ENCODE measurements at regions of chr1 and their contacts with region 1.

Region 1: GRCh38 chr1:74010206-74010605 is 187.8 kb downstream of the LRRIQ3 start:
- DNase-seq: no peak
- H3K4me3 Mint-ChIP-seq: peak overlapping the region; percentile 26
- H3K27ac Mint-ChIP-seq: no peak overlapping the region
- H3K4me1 Mint-ChIP-seq: peaks cover 8% of the 10 kb centered on the region
- H3K27me3 Mint-ChIP-seq: peaks cover 1% of the 10 kb centered on the region

Region 2: DNA sequence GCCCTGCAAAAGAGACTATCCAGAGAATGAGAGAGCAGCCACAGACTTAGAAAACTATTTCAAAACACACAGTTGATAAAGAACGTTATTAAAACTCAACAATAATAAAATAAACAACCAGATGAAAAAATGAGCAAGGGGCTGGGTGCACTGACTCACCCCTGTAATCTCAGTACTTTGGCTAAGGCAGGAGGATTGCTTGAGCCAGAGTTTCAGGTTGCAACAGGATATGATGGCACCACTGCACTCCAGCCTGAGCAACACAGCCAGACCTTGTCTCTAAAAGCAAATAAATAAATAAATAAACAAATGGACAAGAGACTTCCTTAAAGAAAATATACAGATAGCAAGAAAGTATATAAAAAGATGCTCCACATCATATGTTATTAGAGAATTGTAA is 43.2 kb after region 1 on chr1:
- CTCF ChIA-PET with region 1: no interaction called
- POLR2A ChIA-PET with region 1: no interaction called
- intact Hi-C with region 1: no loop called
- DNase-seq: no peak
- H3K4me3 Mint-ChIP-seq: no peak overlapping the region
- H3K27ac Mint-ChIP-seq: no peak overlapping the region
- H3K4me1 Mint-ChIP-seq: no peaks in the 10 kb centered on the region
- H3K27me3 Mint-ChIP-seq: no peaks in the 10 kb centered on the region

Region 3: GRCh38 chr1:74689621-74690363 is 679.6 kb after region 1 on chr1:
- CTCF ChIA-PET with region 1: no interaction called
- POLR2A ChIA-PET with region 1: no interaction called
- intact Hi-C with region 1: loop called (anchors 10 kb)
- DNase-seq: peak; percentile 42
- H3K4me3 Mint-ChIP-seq: no peak overlapping the region
- H3K27ac Mint-ChIP-seq: no peak overlapping the region
- H3K4me1 Mint-ChIP-seq: no peaks in the 10 kb centered on the region
- H3K27me3 Mint-ChIP-seq: peaks cover 2% of the 10 kb centered on the region

Measured in activated CD4-positive, alpha-beta memory T cell treated with anti-CD3 and anti-CD28 coated beads for 36 hours (primary cell).